GM10248 (cell line): ENCODE measurements at regions of chr18 and their contacts with region 1.

Region 1: DNA sequence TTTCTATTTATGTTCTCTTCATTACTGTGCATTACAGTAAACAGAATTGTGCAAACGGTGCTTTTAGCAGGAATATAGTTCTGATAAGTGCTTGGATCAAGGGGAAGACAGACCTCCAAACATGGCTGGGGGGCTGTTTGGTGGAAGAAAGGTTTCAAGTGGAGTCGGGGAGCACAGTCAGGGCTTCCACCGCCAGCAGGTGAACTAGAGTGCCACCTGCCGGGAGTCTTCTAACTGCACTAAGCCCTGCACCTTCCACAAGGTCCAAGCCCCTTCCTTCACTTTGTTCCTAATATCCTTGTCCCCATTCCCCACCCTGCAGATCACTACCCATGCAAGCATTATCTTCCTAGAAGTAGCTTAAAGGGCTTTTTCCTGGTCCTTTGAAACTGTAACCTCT is 11.1 kb downstream of the ONECUT2 start:
- DNase-seq: no peak
- CTCF ChIP-seq: peak; percentile 70

Region 2: DNA sequence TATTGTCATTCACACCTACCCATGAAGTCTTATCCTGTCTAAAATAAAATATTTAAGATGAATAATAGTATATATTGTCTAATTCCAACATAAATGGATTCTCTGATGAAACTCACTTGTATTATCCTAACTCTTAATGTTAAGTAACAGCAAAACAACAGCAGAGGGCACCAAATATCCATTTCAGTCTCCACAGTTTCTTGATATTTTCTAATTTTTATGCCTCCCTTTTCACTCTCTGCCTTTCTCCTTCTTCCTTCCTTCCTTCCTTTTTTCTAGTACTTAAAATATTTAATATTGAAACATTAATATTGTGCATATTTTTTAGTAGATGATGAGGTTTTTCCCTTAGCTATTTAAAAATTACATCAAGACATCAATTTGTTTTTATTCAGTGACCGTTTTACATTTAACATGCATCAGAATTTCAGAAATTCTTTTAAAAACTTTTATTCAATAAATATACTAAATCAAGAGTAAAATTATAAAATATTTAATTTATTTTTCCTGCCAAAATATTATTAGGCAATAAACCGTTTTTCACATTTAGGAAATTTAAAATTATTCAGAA is 697.5 kb before region 1 on chr18:
- CTCF ChIA-PET with region 1: interaction called, 13 read pairs
- POLR2A ChIA-PET with region 1: no interaction called
- DNase-seq: peak; percentile 25
- CTCF ChIP-seq: peak; percentile 52

Region 3: DNA sequence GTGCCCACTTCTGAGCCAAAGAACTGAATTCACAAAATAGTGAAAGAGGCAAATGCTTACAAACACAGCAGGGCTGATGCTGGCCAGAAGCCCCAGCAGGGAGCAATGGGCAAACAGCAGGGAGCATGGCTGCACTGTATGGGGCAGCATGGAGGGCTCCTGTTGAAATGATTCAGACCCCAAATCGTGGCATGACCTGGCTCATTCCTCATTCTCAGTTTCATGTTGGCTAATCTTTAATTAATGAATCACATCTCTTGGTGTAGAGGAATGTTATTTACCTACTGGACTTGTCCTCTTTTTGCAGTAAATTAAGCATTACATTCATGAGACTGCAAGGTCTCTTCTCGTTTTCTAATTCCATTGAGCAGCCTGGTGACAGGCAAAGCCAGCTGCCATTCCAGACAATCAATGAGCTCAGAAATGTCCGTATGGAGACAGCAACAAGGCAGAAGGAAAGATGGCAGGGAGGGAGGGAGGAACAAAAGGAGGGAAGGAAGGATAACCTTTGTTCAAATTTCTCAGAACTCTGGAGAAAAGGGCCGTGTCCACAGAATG is 178.9 kb before region 1 on chr18:
- CTCF ChIA-PET with region 1: no interaction called
- POLR2A ChIA-PET with region 1: no interaction called
- DNase-seq: no peak
- CTCF ChIP-seq: no peak

Region 4: GRCh38 chr18:57376503-57376902 is 69.8 kb before region 1 on chr18:
- CTCF ChIA-PET with region 1: no interaction called
- POLR2A ChIA-PET with region 1: no interaction called
- DNase-seq: no peak
- CTCF ChIP-seq: no peak

Region 5: GRCh38 chr18:57547260-57547659 is 100.9 kb after region 1 on chr18:
- CTCF ChIA-PET with region 1: no interaction called
- POLR2A ChIA-PET with region 1: no interaction called
- DNase-seq: no peak
- CTCF ChIP-seq: no peak